HepG2 (cell line): ENCODE measurements at regions of chr7 and their contacts with region 1.

Region 1: DNA sequence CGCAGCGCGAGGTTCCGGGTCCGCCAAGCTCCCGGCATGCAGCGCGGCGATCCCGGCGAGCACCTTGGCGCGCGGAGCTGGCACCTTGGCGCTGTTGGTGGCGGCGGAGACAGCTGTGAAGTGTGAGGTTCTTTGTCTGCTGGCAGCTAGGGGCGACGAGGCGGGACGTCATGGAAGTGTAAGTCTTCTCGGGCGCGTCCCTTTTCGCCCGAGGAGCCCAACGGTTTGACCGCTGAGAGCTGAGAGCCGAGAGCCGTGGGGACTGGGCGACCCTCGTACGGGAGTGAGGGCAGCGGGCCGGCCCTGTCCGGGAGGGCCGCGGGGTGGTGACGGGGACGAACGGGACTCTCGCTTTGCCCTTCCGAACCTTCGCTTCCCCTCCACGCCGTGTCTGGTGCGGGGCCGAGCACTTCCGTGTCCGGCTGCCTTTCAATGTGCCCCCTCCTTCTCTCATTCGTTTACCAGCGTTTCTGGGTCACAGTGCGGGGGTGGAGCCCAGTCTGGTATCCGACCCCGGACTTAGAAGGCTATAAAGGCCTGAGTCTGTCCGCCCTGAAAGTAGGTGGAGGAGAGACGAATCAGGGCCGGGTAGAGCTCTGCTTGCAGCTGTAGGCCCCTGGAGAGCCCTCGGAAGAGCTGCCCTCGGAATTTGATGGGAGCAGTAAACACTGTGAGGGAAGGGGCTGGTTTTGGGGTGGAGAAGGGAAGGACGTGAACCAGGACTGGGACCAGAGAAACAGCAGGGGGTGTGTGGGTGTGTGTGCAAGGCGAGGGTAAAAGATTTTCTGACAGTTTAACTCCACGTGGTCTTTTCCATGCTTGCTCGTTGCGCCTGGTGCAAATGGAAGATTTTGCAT is at the start of gene CRCP:
- DNase-seq: peak; percentile 87
- ATAC-seq: peak; percentile 89
- H3K4me3 ChIP-seq: peak within 1 kb of the TSS; percentile 77 to 89 (median 77)
- H3K27ac ChIP-seq: peak within 1 kb of the TSS; percentile 98
- H3K4me1 ChIP-seq: peaks cover 56% of the 10 kb centered on the region
- H3K27me3 ChIP-seq: no peaks in the 10 kb centered on the region
- CTCF ChIP-seq: peak; percentile 60
- EP300 ChIP-seq: no peak
- POLR2A ChIP-seq: peak; percentile 74 to 83
- RAD21 ChIP-seq: no peak; the same call in 1 of the 2 replicates
- total RNA-seq, gene CRCP: 31.0 and 41.1 TPM in 2 replicates

Region 2: DNA sequence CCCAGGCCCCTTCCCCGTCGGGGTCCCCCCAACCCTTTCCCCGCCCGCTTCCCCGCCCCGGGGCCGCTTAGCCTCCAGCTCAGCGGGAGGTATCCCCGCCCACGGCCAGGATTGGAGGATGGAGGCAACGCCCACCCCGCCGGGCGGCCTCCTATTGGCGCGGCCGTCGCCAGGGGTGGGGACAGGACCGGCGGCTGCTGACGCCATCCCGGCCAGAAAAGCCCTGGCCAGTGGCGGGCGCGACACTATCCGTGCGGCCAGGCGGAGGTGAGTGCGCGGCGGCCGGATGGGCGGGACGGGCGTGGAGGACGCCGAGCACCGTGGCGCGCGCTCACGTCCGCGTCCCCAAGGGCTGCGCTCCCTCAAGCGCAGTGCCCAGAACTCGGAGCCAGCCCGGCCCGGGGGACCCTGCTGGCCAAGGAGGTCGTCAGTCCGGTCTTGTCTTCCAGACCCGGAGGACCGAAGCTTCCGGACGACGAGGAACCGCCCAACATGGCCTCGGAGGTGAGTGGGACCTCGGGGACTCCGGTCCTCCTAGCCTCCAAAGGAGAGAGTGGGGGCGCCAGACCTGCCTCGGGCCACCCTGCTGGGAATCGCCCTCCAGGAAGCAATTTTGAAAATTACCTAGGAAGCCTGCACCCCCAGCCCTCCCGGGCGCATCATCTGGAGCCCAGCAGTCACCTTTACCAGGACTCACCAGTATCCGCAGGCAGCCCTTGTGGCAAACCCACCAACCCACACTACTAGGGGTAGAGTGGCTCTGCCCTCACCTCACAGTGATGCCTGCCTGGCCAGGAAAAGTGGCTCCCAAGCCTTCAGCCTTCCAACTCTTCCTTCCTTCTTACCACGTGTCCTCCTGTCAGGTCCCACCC is 39.2 kb before region 1 on chr7 and contains the start of gene ASL:
- CTCF ChIA-PET with region 1: no interaction called
- POLR2A ChIA-PET with region 1: interaction called, 36 read pairs
- in situ Hi-C with region 1: no loop called
- intact Hi-C with region 1: loop called (anchors 5 kb)
- DNase-seq: peak; percentile 83
- ATAC-seq: peak; percentile 97
- H3K4me3 ChIP-seq: peak within 1 kb of the TSS; percentile 84 to 95 (median 85)
- H3K27ac ChIP-seq: peak within 1 kb of the TSS; percentile 65
- H3K4me1 ChIP-seq: peaks cover 33% of the 10 kb centered on the region
- H3K27me3 ChIP-seq: peaks cover 0 to 7% of the 10 kb centered on the region in 2 experiments; a peak in 2 of 5 replicates
- CTCF ChIP-seq: peak; percentile 7; the same call in 1 of the 2 replicates
- EP300 ChIP-seq: no peak
- POLR2A ChIP-seq: peak; percentile 72 to 97
- RAD21 ChIP-seq: no peak; the same call in 1 of the 2 replicates
- total RNA-seq, gene ASL: 63.8 and 71.4 TPM in 2 replicates

Region 3: GRCh38 chr7:66204822-66205740 is 90.1 kb after region 1 on chr7 and contains the start of gene TPST1:
- CTCF ChIA-PET with region 1: no interaction called
- POLR2A ChIA-PET with region 1: interaction called, 15 read pairs
- in situ Hi-C with region 1: no loop called
- intact Hi-C with region 1: no loop called
- DNase-seq: peak; percentile 89
- ATAC-seq: peak; percentile 94
- H3K4me3 ChIP-seq: peak within 1 kb of the TSS; percentile 94 to 99 (median 98)
- H3K27ac ChIP-seq: peak within 1 kb of the TSS; percentile 53
- H3K4me1 ChIP-seq: peaks cover 65% of the 10 kb centered on the region
- H3K27me3 ChIP-seq: no peaks in the 10 kb centered on the region; a peak in 1 of 5 replicates
- CTCF ChIP-seq: peak; percentile 80
- EP300 ChIP-seq: 0 out of 4 replicates have a peak, but pooled peaks of 1 of the 2 experiments have one; percentile 17
- POLR2A ChIP-seq: peak; percentile 88 to 98
- RAD21 ChIP-seq: peak; percentile 87
- total RNA-seq, gene TPST1: 11.8 and 24.3 TPM in 2 replicates